CD4-positive, alpha-beta T cell (primary cell): ENCODE measurements at regions of chr9 and their contacts with region 1.

Region 1: GRCh38 chr9:17669206-17669605 is 90.3 kb downstream of the SH3GL2 start:
- DNase-seq: no peak
- ATAC-seq: no peak
- H3K4me3 ChIP-seq: no peak overlapping the region
- H3K4me3 Mint-ChIP-seq: no peak overlapping the region
- H3K27ac ChIP-seq: no peak overlapping the region
- H3K27ac Mint-ChIP-seq: no peak overlapping the region
- H3K4me1 ChIP-seq: no peaks in the 10 kb centered on the region
- H3K4me1 Mint-ChIP-seq: no peaks in the 10 kb centered on the region
- H3K27me3 ChIP-seq: no peaks in the 10 kb centered on the region
- H3K27me3 Mint-ChIP-seq: no peaks in the 10 kb centered on the region
- CTCF ChIP-seq: no peak

Region 2: DNA sequence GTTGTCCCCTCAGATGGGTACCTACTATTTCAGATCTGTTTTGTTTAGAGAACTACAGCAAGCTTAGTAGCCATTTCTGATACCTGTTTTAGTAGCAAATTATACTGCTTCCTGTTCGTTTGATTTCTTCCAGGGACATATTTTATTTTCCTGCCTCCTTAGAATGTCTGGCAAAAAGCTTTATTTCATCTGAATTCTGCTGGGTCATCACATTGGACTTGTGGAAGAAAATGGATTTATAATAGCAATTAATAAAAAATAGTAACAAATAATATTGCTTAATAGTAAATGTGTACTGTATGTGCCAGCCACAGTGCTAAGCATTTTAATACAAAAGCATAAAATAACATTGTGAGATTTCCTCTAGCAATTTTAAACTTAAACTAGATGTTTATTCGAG is 11.0 kb before region 1 on chr9:
- CTCF ChIA-PET with region 1: no interaction called
- POLR2A ChIA-PET with region 1: no interaction called
- intact Hi-C with region 1: loop called in 1 of 2 experiments (anchors 2 kb)
- DNase-seq: no peak
- ATAC-seq: no peak
- H3K4me3 ChIP-seq: no peak overlapping the region
- H3K4me3 Mint-ChIP-seq: no peak overlapping the region
- H3K27ac ChIP-seq: no peak overlapping the region
- H3K27ac Mint-ChIP-seq: no peak overlapping the region
- H3K4me1 ChIP-seq: no peaks in the 10 kb centered on the region
- H3K4me1 Mint-ChIP-seq: no peaks in the 10 kb centered on the region
- H3K27me3 ChIP-seq: no peaks in the 10 kb centered on the region
- H3K27me3 Mint-ChIP-seq: no peaks in the 10 kb centered on the region
- CTCF ChIP-seq: no peak

Region 3: GRCh38 chr9:17725399-17726010 is 56.3 kb after region 1 on chr9:
- CTCF ChIA-PET with region 1: no interaction called
- POLR2A ChIA-PET with region 1: no interaction called
- intact Hi-C with region 1: no loop called
- DNase-seq: no peak
- ATAC-seq: no peak
- H3K4me3 ChIP-seq: no peak overlapping the region
- H3K4me3 Mint-ChIP-seq: no peak overlapping the region
- H3K27ac ChIP-seq: no peak overlapping the region
- H3K27ac Mint-ChIP-seq: no peak overlapping the region
- H3K4me1 ChIP-seq: no peaks in the 10 kb centered on the region
- H3K4me1 Mint-ChIP-seq: no peaks in the 10 kb centered on the region
- H3K27me3 ChIP-seq: no peaks in the 10 kb centered on the region
- H3K27me3 Mint-ChIP-seq: no peaks in the 10 kb centered on the region
- CTCF ChIP-seq: no peak

Region 4: GRCh38 chr9:17970277-17970676 is 301.1 kb after region 1 on chr9:
- CTCF ChIA-PET with region 1: no interaction called
- POLR2A ChIA-PET with region 1: no interaction called
- intact Hi-C with region 1: no loop called
- DNase-seq: no peak
- ATAC-seq: no peak
- H3K4me3 ChIP-seq: no peak overlapping the region
- H3K4me3 Mint-ChIP-seq: no peak overlapping the region
- H3K27ac ChIP-seq: no peak overlapping the region
- H3K27ac Mint-ChIP-seq: no peak overlapping the region
- H3K4me1 ChIP-seq: no peaks in the 10 kb centered on the region
- H3K4me1 Mint-ChIP-seq: no peaks in the 10 kb centered on the region
- H3K27me3 ChIP-seq: no peaks in the 10 kb centered on the region
- H3K27me3 Mint-ChIP-seq: no peaks in the 10 kb centered on the region
- CTCF ChIP-seq: no peak